Right cardiac atrium (tissue), 5 donors: ENCODE measurements at regions of chrX and their contacts with region 1.

Region 1: DNA sequence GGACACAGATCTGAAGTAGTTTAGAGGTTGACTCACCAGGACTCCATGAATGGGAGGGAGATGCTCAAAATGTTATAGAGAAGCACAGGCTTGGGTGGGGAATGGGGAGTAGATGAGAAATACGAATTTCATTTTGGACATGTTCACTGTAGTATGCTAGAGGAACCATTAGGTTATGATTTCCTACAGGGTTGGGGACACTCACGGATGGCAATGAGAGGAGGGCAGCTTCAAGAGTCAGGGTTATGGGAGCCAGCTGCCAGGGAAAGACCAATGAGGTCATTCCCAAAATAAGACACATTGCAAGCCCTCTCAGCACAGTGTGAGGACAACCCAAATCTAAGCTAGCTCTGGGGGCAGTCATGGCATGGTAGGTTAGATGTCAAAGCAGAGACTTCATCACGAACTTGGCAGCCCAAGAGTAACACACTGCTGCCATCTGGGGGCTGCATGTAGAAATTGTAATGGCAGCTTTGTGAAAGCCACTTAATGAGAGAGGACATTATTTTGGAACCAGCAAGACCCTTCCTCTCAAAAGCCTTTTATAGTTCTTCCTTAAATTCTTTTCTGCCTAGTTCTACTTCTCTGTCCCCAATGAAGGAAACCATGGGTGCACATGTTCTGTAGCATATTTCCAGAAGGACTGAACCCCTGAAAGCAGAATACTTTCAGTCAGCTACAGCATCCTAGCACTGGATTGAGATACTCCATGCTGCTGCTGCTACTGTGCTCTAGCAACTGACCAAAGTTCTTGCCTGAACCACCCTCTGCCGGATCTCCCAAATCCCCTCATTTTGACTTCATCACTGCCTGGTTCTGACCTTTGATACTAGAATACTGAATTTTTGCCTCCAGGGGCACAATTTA is 16.2 kb upstream of the ZCCHC12 start:
- DNase-seq: peak in 2 of 3 donors; percentile 26 to 48
- ATAC-seq: peak; percentile 60 to 67
- H3K4me3 ChIP-seq: no peak overlapping the region
- H3K27ac ChIP-seq: no peak overlapping the region
- H3K4me1 ChIP-seq: no peaks in the 10 kb centered on the region
- H3K27me3 ChIP-seq: no peaks in the 10 kb centered on the region

Region 2: GRCh38 chrX:118637997-118638396 is 169.4 kb before region 1 on chrX:
- intact Hi-C with region 1: loop called (anchors 5 to 10 kb)
- DNase-seq: no peak
- ATAC-seq: no peak
- H3K4me3 ChIP-seq: no peak overlapping the region
- H3K27ac ChIP-seq: no peak overlapping the region
- H3K4me1 ChIP-seq: no peaks in the 10 kb centered on the region
- H3K27me3 ChIP-seq: no peaks in the 10 kb centered on the region

Region 3: DNA sequence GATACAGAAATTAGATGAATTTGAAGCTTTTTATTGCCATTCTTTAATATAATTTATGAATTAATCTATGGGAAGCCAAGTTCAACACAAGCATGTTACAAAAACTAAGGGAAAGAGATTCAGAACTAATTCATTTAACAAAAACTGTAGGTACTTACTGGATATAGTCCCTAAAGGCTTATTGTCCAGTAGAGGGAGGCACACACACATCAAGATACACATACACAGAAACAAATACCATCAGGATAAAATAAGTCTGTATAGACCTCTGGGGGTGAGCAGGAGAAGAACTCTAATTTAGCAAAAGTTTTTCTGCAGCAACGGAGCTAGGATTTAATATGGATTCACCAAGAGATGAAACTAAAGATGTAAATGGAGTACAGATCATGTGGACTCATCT is 163.0 kb before region 1 on chrX:
- intact Hi-C with region 1: loop called (anchors 5 to 10 kb)
- DNase-seq: no peak
- ATAC-seq: peak; percentile 57 to 61
- H3K4me3 ChIP-seq: no peak overlapping the region
- H3K27ac ChIP-seq: no peak overlapping the region
- H3K4me1 ChIP-seq: no peaks in the 10 kb centered on the region
- H3K27me3 ChIP-seq: no peaks in the 10 kb centered on the region

Region 4: GRCh38 chrX:119410027-119410823 is 602.8 kb after region 1 on chrX:
- intact Hi-C with region 1: no loop called
- DNase-seq: peak in 1 of 3 donors; percentile 22
- ATAC-seq: no peak
- H3K4me3 ChIP-seq: no peak overlapping the region
- H3K27ac ChIP-seq: no peak overlapping the region
- H3K4me1 ChIP-seq: no peaks in the 10 kb centered on the region
- H3K27me3 ChIP-seq: no peaks in the 10 kb centered on the region